HEK293 (cell line): ENCODE measurements at regions of chr12 and their contacts with region 1.

Region 1: DNA sequence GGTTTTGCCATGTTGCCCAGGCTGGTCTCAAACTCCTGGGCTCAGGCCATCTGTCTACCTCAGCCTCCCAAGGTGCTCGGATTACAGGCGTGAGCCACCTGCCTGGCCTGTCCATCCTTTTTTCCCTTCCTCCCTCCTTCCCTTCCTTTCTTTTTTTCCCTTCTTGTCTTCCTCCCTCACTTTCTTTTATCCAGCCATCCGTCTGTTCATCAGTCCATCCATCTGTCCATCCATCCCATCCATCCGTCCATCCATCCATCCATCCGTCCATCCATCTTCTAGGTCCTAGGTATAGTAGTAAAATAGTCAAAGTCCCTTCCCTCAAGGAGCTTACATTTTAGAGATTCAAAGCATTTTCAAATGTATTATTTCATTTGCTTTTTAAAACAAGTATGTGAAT is 56.8 kb downstream of the CRADD start:
- H3K4me3 ChIP-seq: no peak overlapping the region
- H3K27ac ChIP-seq: no peak overlapping the region
- H3K4me1 ChIP-seq: no peaks in the 10 kb centered on the region
- CTCF ChIP-seq: no peak

Region 2: GRCh38 chr12:93667672-93668071 is 66.3 kb before region 1 on chr12:
- CTCF ChIA-PET with region 1: interaction called, 11 read pairs
- POLR2A ChIA-PET with region 1: no interaction called
- H3K4me3 ChIP-seq: no peak overlapping the region
- H3K27ac ChIP-seq: no peak overlapping the region
- H3K4me1 ChIP-seq: no peaks in the 10 kb centered on the region
- CTCF ChIP-seq: no peak